Astrocyte of the cerebellum (primary cell): ENCODE measurements at regions of chr12 and their contacts with region 1.

Region 1: DNA sequence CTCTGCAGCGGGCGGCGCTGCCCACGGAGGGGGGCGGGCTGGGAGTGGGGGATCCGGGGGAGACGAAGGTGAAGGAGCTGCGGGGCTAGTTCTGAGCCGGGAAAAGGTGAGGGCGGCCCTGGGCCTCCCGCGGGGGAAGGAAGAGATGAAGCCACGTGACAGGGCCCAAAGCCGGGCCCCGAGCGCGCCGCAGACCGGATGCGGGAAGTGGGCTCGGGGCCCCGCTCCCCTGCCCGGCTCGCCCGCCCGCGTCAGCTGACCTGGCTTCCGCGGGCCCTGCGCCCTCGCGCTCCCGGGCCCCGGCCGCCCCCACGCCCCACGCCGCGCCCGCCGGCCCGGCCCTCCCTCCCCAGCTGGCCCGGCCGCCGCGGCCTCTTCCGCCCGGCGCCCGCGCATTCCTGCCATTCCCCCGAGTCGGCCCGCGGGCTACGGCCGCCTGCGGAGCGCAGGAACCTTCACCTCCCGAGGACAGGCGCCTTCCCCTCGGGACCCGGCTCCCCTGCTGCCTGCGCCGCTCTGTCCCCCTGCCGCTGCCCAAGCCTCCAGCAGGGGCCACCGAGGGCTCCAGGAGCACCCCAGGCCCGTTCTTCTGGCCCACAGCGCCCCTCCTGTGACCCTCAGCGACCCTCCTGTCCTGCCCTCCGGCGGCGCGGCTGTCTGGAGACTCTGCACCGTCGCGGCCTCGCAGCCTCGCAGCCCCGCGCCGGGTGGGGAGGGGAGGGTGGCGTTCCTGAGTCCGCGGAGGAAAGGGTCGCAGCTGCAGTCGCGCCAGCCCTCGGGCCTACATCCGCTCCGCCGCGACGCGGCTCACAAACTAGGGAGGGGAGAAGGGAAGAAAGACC is 20.4 kb downstream of the NINJ2 start:
- DNase-seq: no peak
- H3K4me3 ChIP-seq: peak overlapping the region; percentile 31
- CTCF ChIP-seq: peak; percentile 22

Region 2: GRCh38 chr12:538731-539539 is 103.9 kb before region 1 on chr12:
- in situ Hi-C with region 1: no loop called
- DNase-seq: peak; percentile 4
- H3K4me3 ChIP-seq: no peak overlapping the region
- CTCF ChIP-seq: no peak

Region 3: GRCh38 chr12:779745-780734 is 137.2 kb after region 1 on chr12:
- in situ Hi-C with region 1: loop called (anchors 10 kb)
- DNase-seq: peak; percentile 34
- H3K4me3 ChIP-seq: no peak overlapping the region
- CTCF ChIP-seq: no peak

Region 4: DNA sequence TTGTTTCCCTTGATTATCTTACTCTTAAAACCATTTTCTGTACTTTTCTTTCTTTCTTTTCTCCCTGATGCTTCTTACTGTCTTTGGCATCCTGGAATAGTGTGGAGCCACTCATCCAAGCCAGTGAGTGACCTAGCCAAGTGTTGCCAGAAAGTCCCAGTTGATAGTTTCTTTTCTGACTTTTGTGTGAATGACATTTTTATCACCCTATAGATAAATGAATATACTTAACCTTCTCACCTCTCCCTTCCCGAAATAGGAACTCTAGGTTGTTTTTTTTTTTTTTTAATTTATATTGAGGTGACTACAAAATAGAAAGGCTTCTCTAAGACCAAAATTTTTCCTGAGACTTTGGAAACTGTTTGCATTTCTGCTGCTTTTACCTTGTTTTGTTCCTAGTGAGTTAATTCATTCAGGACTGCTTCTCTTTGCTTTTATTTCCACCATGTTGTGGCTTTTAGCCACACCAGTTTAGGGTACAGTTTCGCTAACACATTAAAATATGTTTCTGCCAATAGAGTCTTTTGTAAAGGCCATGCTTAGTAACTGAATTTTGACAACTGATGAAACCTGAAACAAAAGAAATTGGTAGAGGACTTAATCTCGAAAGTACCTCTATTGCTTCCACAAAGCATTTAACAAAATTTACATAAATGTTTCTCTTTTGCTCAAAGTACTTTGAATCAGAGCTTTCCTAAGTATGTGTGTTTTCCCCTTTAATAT is 542.8 kb after region 1 on chr12:
- in situ Hi-C with region 1: no loop called
- DNase-seq: no peak
- H3K4me3 ChIP-seq: no peak overlapping the region
- CTCF ChIP-seq: no peak